ENCODE measurements at regions of chr5 and their contacts with region 1.

Region 1: DNA sequence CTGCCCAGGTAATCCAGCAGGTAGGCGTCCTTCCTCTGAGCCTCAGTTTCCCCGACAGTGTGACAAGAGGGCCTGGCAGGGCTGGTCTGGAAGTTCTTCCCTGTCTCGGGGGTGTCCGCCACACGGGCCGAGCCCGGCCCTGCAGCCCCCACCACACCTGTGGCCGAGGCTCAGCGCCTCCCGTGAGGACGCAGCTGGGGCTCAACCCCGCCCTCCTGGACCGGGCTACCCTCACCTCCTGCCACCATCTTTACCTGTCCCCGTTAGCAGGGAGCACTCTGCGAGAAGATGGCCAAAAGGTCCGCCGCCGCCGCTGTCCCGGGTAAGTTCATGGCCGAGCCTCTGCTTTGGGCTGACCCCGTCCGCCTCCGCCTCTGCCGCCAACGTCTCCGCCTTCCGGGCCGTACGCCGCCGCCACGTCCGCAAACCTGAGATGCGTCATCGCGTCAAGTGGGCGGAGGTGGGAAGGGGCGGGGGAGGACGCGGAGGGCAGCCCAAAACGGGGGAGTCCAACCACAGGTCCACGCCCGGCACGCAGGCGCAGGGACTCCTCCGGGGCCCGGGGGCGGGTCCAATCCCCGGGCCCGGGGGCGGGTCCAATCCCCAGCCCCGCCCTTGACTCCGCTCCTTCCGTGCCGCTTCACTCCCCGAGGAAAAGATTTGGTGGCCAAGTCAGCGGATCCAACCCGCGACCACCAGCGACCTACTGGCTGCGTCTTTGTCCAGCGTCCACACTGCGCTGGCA is at the start of gene LYSMD3:
- DNase-seq: peak; percentile 98 to 99 (median 98)
- ATAC-seq: peak; percentile 94
- H3K4me3 ChIP-seq: peak within 1 kb of the TSS; percentile 76
- H3K27ac ChIP-seq: peak within 1 kb of the TSS; percentile 92
- H3K4me1 ChIP-seq: peaks cover 4 to 18% of the 10 kb centered on the region in 2 experiments; a peak in 4 of 5 replicates
- H3K27me3 ChIP-seq: no peaks in the 10 kb centered on the region
- CTCF ChIP-seq: no peak
- EP300 ChIP-seq: no peak
- POLR2A ChIP-seq: peak; percentile 89
- RAD21 ChIP-seq: no peak
- polyA plus RNA-seq, gene LYSMD3: 9.5 to 19.2 TPM

Region 2: DNA sequence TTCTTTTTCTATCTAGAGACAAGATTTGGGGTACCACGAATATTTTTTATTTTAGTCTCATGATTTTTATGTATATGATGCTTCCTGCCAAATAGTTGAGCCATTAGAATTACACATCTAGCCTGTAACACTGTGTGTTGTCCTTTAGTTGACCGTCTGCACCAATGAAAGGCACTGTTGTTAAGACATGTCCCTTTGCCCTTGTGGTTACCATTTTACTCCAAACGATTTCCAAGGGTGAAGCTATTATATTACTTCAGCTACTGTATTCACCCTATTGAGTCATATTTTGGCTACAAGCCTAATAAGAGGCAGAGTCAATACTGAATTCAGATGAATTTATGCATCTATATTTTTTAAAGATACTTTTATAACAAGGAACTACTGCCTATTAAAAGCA is 327.4 kb before region 1 on chr5:
- CTCF ChIA-PET with region 1: no interaction called
- POLR2A ChIA-PET with region 1: no interaction called
- in situ Hi-C with region 1: no loop called
- intact Hi-C with region 1: loop called (anchors 10 kb)
- DNase-seq: no peak
- ATAC-seq: no peak
- H3K4me3 ChIP-seq: no peak overlapping the region
- H3K27ac ChIP-seq: no peak overlapping the region
- H3K4me1 ChIP-seq: no peaks in the 10 kb centered on the region
- H3K27me3 ChIP-seq: no peaks in the 10 kb centered on the region
- CTCF ChIP-seq: no peak
- EP300 ChIP-seq: no peak
- POLR2A ChIP-seq: no peak
- RAD21 ChIP-seq: no peak

Region 3: GRCh38 chr5:90293931-90294330 is 235.4 kb before region 1 on chr5:
- CTCF ChIA-PET with region 1: no interaction called
- POLR2A ChIA-PET with region 1: no interaction called
- in situ Hi-C with region 1: no loop called
- intact Hi-C with region 1: loop called (anchors 10 kb)
- DNase-seq: no peak
- ATAC-seq: no peak
- H3K4me3 ChIP-seq: no peak overlapping the region
- H3K27ac ChIP-seq: no peak overlapping the region
- H3K4me1 ChIP-seq: no peaks in the 10 kb centered on the region
- H3K27me3 ChIP-seq: no peaks in the 10 kb centered on the region; a peak in 1 of 5 replicates
- CTCF ChIP-seq: no peak
- EP300 ChIP-seq: no peak
- POLR2A ChIP-seq: no peak
- RAD21 ChIP-seq: no peak

Region 4: GRCh38 chr5:90474235-90475109 is 54.9 kb before region 1 on chr5 and contains the starts of genes MBLAC2 and POLR3G:
- CTCF ChIA-PET with region 1: interaction called, 3 read pairs
- POLR2A ChIA-PET with region 1: interaction called, 3 read pairs
- in situ Hi-C with region 1: loop called (anchors 5 kb)
- intact Hi-C with region 1: loop called (anchors 1 kb)
- DNase-seq: peak; percentile 92 to 96 (median 94)
- ATAC-seq: peak; percentile 86
- H3K4me3 ChIP-seq: peak within 1 kb of the TSS; percentile 65
- H3K27ac ChIP-seq: peak within 1 kb of the TSS; percentile 92
- H3K4me1 ChIP-seq: peaks cover 16 to 25% of the 10 kb centered on the region in 2 experiments; a peak in 4 of 5 replicates
- H3K27me3 ChIP-seq: no peaks in the 10 kb centered on the region
- CTCF ChIP-seq: peak; percentile 36 to 84 (median 52)
- EP300 ChIP-seq: no peak; the same call in 1 of the 2 replicates
- POLR2A ChIP-seq: peak; percentile 95
- RAD21 ChIP-seq: no peak
- polyA plus RNA-seq, gene MBLAC2: 2.4 to 3.2 TPM
- polyA plus RNA-seq, gene POLR3G: 95.1 to 111 TPM

Region 5: DNA sequence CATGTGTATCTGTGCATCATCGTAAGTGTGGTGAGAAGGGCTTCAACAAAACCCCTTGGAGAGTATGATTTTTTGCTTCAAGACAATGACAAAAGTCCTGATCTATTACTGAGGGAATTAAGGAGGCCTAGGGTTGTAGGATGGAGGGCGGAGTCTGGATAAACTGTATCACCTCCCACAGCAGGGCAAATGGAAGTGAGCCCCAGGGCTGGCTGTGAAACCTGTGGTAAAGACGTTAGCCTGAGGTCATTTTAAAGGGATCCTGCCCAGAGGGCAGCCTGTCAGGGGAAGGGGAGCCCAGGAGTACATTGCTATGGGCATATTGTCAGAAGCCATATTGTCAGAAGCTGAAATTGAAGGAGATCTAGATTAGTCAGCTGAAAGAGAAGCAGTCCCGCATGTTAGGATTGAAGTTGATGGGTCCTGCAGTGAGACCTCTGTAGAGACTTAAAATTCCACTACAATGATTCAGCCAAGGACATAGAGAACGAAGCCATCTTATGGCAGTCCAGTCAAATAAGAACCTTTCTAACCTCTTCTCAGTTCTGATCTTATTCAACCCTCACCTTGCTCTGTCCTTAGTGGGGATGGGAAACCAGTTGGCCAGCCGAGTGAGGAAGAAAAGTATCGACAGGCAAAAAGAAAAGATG is 56.1 kb after region 1 on chr5:
- CTCF ChIA-PET with region 1: no interaction called
- POLR2A ChIA-PET with region 1: no interaction called
- in situ Hi-C with region 1: no loop called
- intact Hi-C with region 1: loop called (anchors 5 kb)
- DNase-seq: no peak
- ATAC-seq: peak; percentile 75
- H3K4me3 ChIP-seq: no peak overlapping the region
- H3K27ac ChIP-seq: no peak overlapping the region
- H3K4me1 ChIP-seq: peaks cover 0 to 10% of the 10 kb centered on the region in 2 experiments; a peak in 3 of 5 replicates
- H3K27me3 ChIP-seq: no peaks in the 10 kb centered on the region
- CTCF ChIP-seq: no peak
- EP300 ChIP-seq: no peak
- POLR2A ChIP-seq: no peak
- RAD21 ChIP-seq: no peak

Region 6: DNA sequence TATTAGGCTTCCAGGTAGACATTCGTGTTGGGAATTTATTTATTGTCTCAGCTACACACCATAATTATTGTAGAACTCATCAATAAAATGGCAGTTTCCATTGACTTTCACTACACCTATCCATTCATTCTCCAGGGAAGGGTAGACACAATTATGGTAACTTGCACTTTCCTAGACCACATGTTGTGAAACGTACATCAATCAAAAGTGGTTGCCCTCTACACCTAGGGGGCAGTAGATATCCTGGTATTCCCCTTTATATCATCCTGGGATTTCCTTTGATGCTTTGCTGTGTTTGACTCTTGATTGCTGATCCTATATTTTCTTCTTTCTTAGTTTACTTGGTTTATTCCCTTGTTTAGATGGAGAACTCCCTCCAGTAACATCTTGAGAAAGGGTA is 77.2 kb after region 1 on chr5:
- CTCF ChIA-PET with region 1: interaction called, 3 read pairs
- POLR2A ChIA-PET with region 1: interaction called, 3 read pairs
- in situ Hi-C with region 1: no loop called
- intact Hi-C with region 1: loop called (anchors 2 kb)
- DNase-seq: peak; percentile 24 to 74 (median 40)
- ATAC-seq: peak; percentile 74
- H3K4me3 ChIP-seq: no peak overlapping the region
- H3K27ac ChIP-seq: peak overlapping the region; percentile 34
- H3K4me1 ChIP-seq: peaks cover 0 to 13% of the 10 kb centered on the region in 2 experiments; a peak in 2 of 5 replicates
- H3K27me3 ChIP-seq: no peaks in the 10 kb centered on the region
- CTCF ChIP-seq: peak; percentile 56 to 77 (median 70); a peak in 5 of 6 replicates
- EP300 ChIP-seq: no peak
- POLR2A ChIP-seq: no peak
- RAD21 ChIP-seq: peak; percentile 79 to 93

Region 7: GRCh38 chr5:90640484-90641059 is 111.2 kb after region 1 on chr5:
- CTCF ChIA-PET with region 1: no interaction called
- POLR2A ChIA-PET with region 1: no interaction called
- in situ Hi-C with region 1: no loop called
- intact Hi-C with region 1: no loop called
- DNase-seq: peak in 1 of 4 experiments; percentile 78
- ATAC-seq: peak; percentile 58
- H3K4me3 ChIP-seq: peak overlapping the region; percentile 1; the same call in 1 of the 2 replicates
- H3K27ac ChIP-seq: peak overlapping the region; percentile 93
- H3K4me1 ChIP-seq: peaks cover 0 to 29% of the 10 kb centered on the region in 2 experiments; a peak in 4 of 5 replicates
- H3K27me3 ChIP-seq: no peaks in the 10 kb centered on the region
- CTCF ChIP-seq: no peak
- EP300 ChIP-seq: peak; percentile 13; the same call in 1 of the 2 replicates
- POLR2A ChIP-seq: no peak
- RAD21 ChIP-seq: no peak

Region 8: GRCh38 chr5:90783460-90784333 is 254.3 kb after region 1 on chr5:
- CTCF ChIA-PET with region 1: no interaction called
- POLR2A ChIA-PET with region 1: no interaction called
- in situ Hi-C with region 1: no loop called
- intact Hi-C with region 1: loop called (anchors 2 kb)
- DNase-seq: peak; percentile 52 to 81 (median 60)
- ATAC-seq: peak; percentile 96
- H3K4me3 ChIP-seq: no peak overlapping the region
- H3K27ac ChIP-seq: no peak overlapping the region
- H3K4me1 ChIP-seq: no peaks in the 10 kb centered on the region
- H3K27me3 ChIP-seq: no peaks in the 10 kb centered on the region
- CTCF ChIP-seq: peak; percentile 73 to 95 (median 85)
- EP300 ChIP-seq: no peak
- POLR2A ChIP-seq: no peak
- RAD21 ChIP-seq: peak; percentile 77 to 84

Region 9: GRCh38 chr5:90909101-90909503 is 379.7 kb after region 1 on chr5:
- CTCF ChIA-PET with region 1: no interaction called
- POLR2A ChIA-PET with region 1: no interaction called
- in situ Hi-C with region 1: no loop called
- intact Hi-C with region 1: no loop called
- DNase-seq: no peak
- ATAC-seq: peak; percentile 33; the same call in 1 of the 3 replicates
- H3K4me3 ChIP-seq: no peak overlapping the region
- H3K27ac ChIP-seq: no peak overlapping the region
- H3K4me1 ChIP-seq: no peaks in the 10 kb centered on the region
- H3K27me3 ChIP-seq: no peaks in the 10 kb centered on the region
- CTCF ChIP-seq: no peak
- EP300 ChIP-seq: no peak
- POLR2A ChIP-seq: no peak
- RAD21 ChIP-seq: no peak

Measured in K562 (cell line).